ENCODE measurements at regions of chr6 and their contacts with region 1.

Region 1: DNA sequence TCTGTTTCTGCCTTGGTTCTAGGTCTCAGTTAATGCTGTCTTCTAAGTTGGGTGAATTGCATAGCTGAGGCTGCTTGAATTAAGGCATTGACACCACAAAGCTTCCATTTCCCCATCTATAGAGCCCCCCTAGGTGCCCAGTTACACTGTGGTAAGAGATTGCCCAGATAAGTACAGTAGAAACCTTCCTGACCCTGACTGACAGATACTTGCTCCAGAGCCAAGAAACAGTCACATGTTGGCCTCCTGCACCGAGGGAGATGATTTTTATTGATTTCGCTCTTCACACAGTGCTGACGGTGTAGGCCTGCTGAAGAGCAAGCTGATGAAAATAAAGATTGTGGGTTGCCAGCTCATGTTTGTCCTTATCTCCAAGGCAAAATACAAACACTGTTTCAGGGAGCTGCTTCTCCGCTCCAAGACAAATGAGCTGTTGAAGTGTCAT is 67.9 kb downstream of the TRMT11 start:
- DNase-seq: peak in 3 of 4 experiments; percentile 16 to 79 (median 40)
- ATAC-seq: peak; percentile 76
- H3K4me3 ChIP-seq: no peak overlapping the region
- H3K27ac ChIP-seq: peak overlapping the region; percentile 66; the same call in 2 of the 3 replicates
- H3K4me1 ChIP-seq: peaks cover 9 to 61% of the 10 kb centered on the region in 2 experiments
- H3K27me3 ChIP-seq: no peaks in the 10 kb centered on the region
- CTCF ChIP-seq: no peak
- EP300 ChIP-seq: peak; percentile 74
- POLR2A ChIP-seq: no peak
- RAD21 ChIP-seq: peak in 1 of 2 experiments; percentile 26; a peak in 2 of 4 replicates

Region 2: DNA sequence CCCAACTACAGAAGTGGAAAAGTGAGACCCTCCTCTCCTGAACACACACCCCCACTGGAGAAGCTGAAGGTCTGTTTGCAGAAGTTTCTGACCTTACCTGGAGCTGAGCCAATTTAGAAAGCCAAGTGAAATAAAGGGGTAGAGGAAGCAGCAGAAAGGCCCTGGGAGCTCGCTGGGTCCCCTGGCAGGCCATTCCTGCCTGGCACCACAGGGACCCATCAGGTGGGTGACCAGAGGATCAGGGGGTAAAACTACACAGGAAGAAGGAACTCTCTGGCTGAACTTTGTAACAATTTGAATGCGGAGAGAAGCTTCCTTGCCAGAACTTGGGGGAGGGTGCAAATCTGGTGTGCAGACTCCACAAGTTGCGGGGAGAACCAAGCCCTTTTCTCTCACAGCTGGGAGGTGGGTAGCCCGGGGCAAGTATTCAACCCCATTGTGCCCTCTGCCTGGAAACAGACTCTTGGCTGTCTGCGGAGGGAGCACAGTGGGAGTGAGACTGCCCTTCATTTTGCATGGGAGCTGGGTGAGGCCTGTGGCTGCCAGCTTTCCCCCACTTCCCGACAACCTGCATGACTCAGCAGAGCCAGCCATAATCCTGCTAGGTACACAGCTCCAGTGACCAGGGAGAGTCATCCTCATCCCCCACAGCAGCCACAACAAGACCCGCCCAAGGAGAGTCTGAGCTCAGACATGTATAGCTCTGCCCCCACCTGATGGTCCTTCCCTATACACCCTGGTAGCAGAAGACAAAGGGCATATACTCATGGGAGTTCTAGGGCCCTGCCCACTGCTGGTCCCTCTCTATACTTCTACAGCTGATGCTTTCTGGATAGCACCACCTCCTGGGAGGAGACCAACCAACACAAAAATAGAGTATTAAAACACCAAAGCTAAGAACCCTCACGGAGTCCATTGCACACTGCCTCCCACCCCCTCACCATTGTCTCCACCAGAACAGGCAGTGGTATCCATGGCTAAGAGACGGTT is 930.2 kb before region 1 on chr6:
- CTCF ChIA-PET with region 1: no interaction called
- POLR2A ChIA-PET with region 1: no interaction called
- in situ Hi-C with region 1: no loop called
- intact Hi-C with region 1: no loop called
- DNase-seq: peak in 2 of 4 experiments; percentile 14 to 54
- ATAC-seq: peak; percentile 68
- H3K4me3 ChIP-seq: no peak overlapping the region
- H3K27ac ChIP-seq: no peak overlapping the region
- H3K4me1 ChIP-seq: peaks cover 0 to 6% of the 10 kb centered on the region in 2 experiments; a peak in 2 of 5 replicates
- H3K27me3 ChIP-seq: no peaks in the 10 kb centered on the region
- CTCF ChIP-seq: peak in 1 of 3 experiments; percentile 23; a peak in 1 of 6 replicates
- EP300 ChIP-seq: no peak
- POLR2A ChIP-seq: no peak
- RAD21 ChIP-seq: no peak

Region 3: GRCh38 chr6:125357515-125358256 is 696.6 kb before region 1 on chr6:
- CTCF ChIA-PET with region 1: no interaction called
- POLR2A ChIA-PET with region 1: no interaction called
- in situ Hi-C with region 1: no loop called
- intact Hi-C with region 1: no loop called
- DNase-seq: no peak
- ATAC-seq: no peak
- H3K4me3 ChIP-seq: no peak overlapping the region
- H3K27ac ChIP-seq: no peak overlapping the region
- H3K4me1 ChIP-seq: no peaks in the 10 kb centered on the region
- H3K27me3 ChIP-seq: peaks cover 5 to 17% of the 10 kb centered on the region in 2 experiments
- CTCF ChIP-seq: no peak
- EP300 ChIP-seq: no peak
- POLR2A ChIP-seq: no peak
- RAD21 ChIP-seq: no peak

Region 4: GRCh38 chr6:126083875-126084274 is 29.6 kb after region 1 on chr6:
- CTCF ChIA-PET with region 1: no interaction called
- POLR2A ChIA-PET with region 1: no interaction called
- in situ Hi-C with region 1: no loop called
- intact Hi-C with region 1: no loop called
- DNase-seq: no peak
- ATAC-seq: no peak
- H3K4me3 ChIP-seq: no peak overlapping the region
- H3K27ac ChIP-seq: no peak overlapping the region
- H3K4me1 ChIP-seq: no peaks in the 10 kb centered on the region; a peak in 1 of 5 replicates
- H3K27me3 ChIP-seq: no peaks in the 10 kb centered on the region
- CTCF ChIP-seq: no peak
- EP300 ChIP-seq: no peak
- POLR2A ChIP-seq: no peak
- RAD21 ChIP-seq: no peak

Region 5: GRCh38 chr6:126112144-126112632 is 57.9 kb after region 1 on chr6:
- CTCF ChIA-PET with region 1: no interaction called
- POLR2A ChIA-PET with region 1: interaction called, 3 read pairs
- in situ Hi-C with region 1: no loop called
- intact Hi-C with region 1: loop called (anchors 2 kb)
- DNase-seq: peak in 2 of 4 experiments; percentile 57 to 92
- ATAC-seq: peak; percentile 80
- H3K4me3 ChIP-seq: no peak overlapping the region
- H3K27ac ChIP-seq: peak overlapping the region; percentile 73
- H3K4me1 ChIP-seq: peaks cover 0 to 48% of the 10 kb centered on the region in 2 experiments; a peak in 4 of 5 replicates
- H3K27me3 ChIP-seq: no peaks in the 10 kb centered on the region
- CTCF ChIP-seq: peak in 2 of 3 experiments; percentile 2 to 29; a peak in 2 of 6 replicates
- EP300 ChIP-seq: peak; percentile 99
- POLR2A ChIP-seq: no peak
- RAD21 ChIP-seq: peak; percentile 25 to 44; a peak in 3 of 4 replicates

Region 6: GRCh38 chr6:126118058-126118755 is 63.9 kb after region 1 on chr6:
- CTCF ChIA-PET with region 1: no interaction called
- POLR2A ChIA-PET with region 1: interaction called, 3 read pairs
- in situ Hi-C with region 1: no loop called
- intact Hi-C with region 1: loop called (anchors 2 kb)
- DNase-seq: peak in 3 of 4 experiments; percentile 23 to 81 (median 71)
- ATAC-seq: peak; percentile 86
- H3K4me3 ChIP-seq: no peak overlapping the region
- H3K27ac ChIP-seq: no peak overlapping the region
- H3K4me1 ChIP-seq: peaks cover 5 to 37% of the 10 kb centered on the region in 2 experiments; a peak in 4 of 5 replicates
- H3K27me3 ChIP-seq: no peaks in the 10 kb centered on the region
- CTCF ChIP-seq: peak in 1 of 3 experiments; percentile 6; a peak in 1 of 6 replicates
- EP300 ChIP-seq: peak; percentile 91
- POLR2A ChIP-seq: no peak
- RAD21 ChIP-seq: no peak; a peak in 1 of 4 replicates

Measured in K562 (cell line).